ENCODE measurements at regions of chr3 and their contacts with region 1.

Region 1: GRCh38 chr3:173553635-173554280 is 156.2 kb downstream of the NLGN1 start:
- DNase-seq: no peak
- H3K4me3 ChIP-seq: no peak overlapping the region
- H3K27ac ChIP-seq: no peak overlapping the region
- H3K4me1 ChIP-seq: peaks cover 0 to 4% (median 0%) of the 10 kb centered on the region in 4 experiments; a peak in 1 of 7 replicates
- H3K27me3 ChIP-seq: no peaks in the 10 kb centered on the region
- CTCF ChIP-seq: peak in 2 of 3 experiments; percentile 61 to 78; a peak in 3 of 4 replicates
- EP300 ChIP-seq: no peak
- POLR2A ChIP-seq: no peak
- RAD21 ChIP-seq: peak; percentile 62 to 68

Region 2: GRCh38 chr3:173529067-173529711 is 24.6 kb before region 1 on chr3:
- CTCF ChIA-PET with region 1: interaction called, 23 read pairs
- POLR2A ChIA-PET with region 1: no interaction called
- DNase-seq: peak in 1 of 2 experiments; percentile 29
- H3K4me3 ChIP-seq: no peak overlapping the region
- H3K27ac ChIP-seq: no peak overlapping the region
- H3K4me1 ChIP-seq: no peaks in the 10 kb centered on the region
- H3K27me3 ChIP-seq: no peaks in the 10 kb centered on the region
- CTCF ChIP-seq: peak; percentile 86 to 94 (median 91)
- EP300 ChIP-seq: no peak
- POLR2A ChIP-seq: no peak
- RAD21 ChIP-seq: peak; percentile 72 to 86

Region 3: DNA sequence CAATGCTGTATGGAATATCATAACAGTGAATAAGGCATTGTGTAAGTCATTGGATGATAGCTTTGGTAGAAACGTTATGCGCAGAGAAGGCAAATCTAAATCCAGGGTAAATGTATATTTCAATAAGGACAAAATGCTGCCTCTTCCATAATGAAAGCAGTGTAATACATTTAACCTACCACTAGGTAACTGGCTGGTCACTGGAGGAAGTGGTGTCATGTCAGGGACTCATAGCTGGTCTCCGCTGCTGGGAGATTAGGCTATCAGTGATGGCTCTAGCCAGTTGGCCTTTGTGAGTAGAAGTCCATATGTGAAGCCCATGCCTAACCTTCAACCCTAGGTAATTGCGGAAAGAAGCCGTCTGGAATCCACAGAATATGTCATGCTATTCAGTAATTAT is 15.3 kb before region 1 on chr3:
- CTCF ChIA-PET with region 1: interaction called, 16 read pairs
- POLR2A ChIA-PET with region 1: no interaction called
- DNase-seq: no peak
- H3K4me3 ChIP-seq: no peak overlapping the region
- H3K27ac ChIP-seq: no peak overlapping the region
- H3K4me1 ChIP-seq: no peaks in the 10 kb centered on the region
- H3K27me3 ChIP-seq: no peaks in the 10 kb centered on the region
- CTCF ChIP-seq: peak in 2 of 3 experiments; percentile 1 to 51; a peak in 2 of 4 replicates
- EP300 ChIP-seq: no peak
- POLR2A ChIP-seq: no peak
- RAD21 ChIP-seq: 0 out of 4 replicates have a peak, but pooled peaks of 1 of the 2 experiments have one; percentile 13

Measured in H1 (cell line).